Activated naive CD4-positive, alpha-beta T cell treated with anti-CD3 and anti-CD28 coated beads for 36 hours (primary cell): ENCODE measurements at regions of chr14 and their contacts with region 1.

Region 1: DNA sequence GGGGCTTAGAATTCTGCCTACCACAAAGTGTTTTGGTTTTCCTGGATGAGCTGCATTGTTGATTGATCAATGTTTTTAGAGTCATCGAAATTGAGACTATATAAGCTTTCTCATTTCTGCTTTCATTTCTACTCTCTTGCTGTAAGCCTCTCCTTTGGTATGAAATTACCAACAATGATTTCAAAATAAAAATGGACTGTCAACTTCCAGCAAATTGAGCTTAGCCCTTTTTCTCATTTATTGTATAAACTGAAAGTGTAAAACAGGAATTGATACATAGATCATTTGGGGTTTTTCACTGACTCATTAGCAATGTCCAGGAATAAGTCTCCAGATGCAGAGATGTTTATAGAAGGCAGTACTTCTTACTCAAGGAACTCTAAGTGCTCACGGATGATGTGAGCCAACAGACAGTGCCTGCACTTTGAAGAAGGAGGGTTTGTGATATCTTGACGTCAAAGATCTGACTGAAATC is 20.0 kb upstream of the PCNX1 start:
- DNase-seq: peak; percentile 41
- H3K4me3 Mint-ChIP-seq: peak overlapping the region; percentile 39
- H3K27ac Mint-ChIP-seq: peak overlapping the region; percentile 92
- H3K4me1 Mint-ChIP-seq: peaks cover 74% of the 10 kb centered on the region
- H3K27me3 Mint-ChIP-seq: peaks cover 2% of the 10 kb centered on the region

Region 2: DNA sequence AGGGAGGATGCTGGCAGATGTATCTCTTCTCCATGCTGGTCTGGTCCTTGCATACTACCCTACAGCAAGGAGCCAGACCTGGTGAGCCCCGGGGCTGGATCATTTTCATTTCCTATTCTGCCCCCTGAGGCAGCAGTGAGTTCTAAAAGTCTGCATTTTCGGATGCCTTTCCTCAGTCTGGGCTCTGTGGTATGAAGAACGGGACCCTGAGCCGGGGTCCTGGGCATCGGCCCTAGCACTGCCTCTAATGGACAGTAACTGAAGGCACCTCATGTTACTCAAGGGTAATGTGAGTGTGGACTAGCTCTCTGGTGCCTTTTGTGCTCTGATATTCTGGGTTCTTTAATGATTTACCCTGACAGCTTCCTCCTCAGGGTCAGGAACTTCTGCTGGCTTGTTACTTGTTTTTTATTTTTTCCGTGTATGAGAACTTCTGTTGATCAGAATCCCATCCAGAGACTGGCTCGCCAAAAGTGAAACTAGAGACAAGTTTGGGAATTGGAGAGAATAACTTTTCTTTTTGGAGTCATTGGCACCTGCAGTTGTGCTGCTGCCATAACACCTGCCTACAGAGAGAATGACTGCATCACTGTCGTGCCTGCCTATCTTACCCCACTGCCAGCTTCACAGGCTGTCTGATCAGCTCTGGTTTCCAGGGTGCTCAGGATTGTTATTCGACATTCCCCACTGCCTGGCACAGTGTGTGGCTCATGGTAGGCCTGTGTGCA is 1213.5 kb before region 1 on chr14:
- CTCF ChIA-PET with region 1: no interaction called
- intact Hi-C with region 1: loop called (anchors 5 kb)
- DNase-seq: peak; percentile 37
- H3K4me3 Mint-ChIP-seq: peak overlapping the region; percentile 49
- H3K27ac Mint-ChIP-seq: peak overlapping the region; percentile 99
- H3K4me1 Mint-ChIP-seq: peaks cover 94% of the 10 kb centered on the region
- H3K27me3 Mint-ChIP-seq: no peaks in the 10 kb centered on the region

Region 3: GRCh38 chr14:70748422-70748821 is 138.8 kb before region 1 on chr14:
- CTCF ChIA-PET with region 1: no interaction called
- intact Hi-C with region 1: no loop called
- DNase-seq: no peak
- H3K4me3 Mint-ChIP-seq: no peak overlapping the region
- H3K27ac Mint-ChIP-seq: no peak overlapping the region
- H3K4me1 Mint-ChIP-seq: no peaks in the 10 kb centered on the region
- H3K27me3 Mint-ChIP-seq: no peaks in the 10 kb centered on the region

Region 4: GRCh38 chr14:70816525-70816924 is 70.7 kb before region 1 on chr14:
- CTCF ChIA-PET with region 1: interaction called, 9 read pairs
- intact Hi-C with region 1: loop called (anchors 2 kb)
- DNase-seq: no peak
- H3K4me3 Mint-ChIP-seq: no peak overlapping the region
- H3K27ac Mint-ChIP-seq: no peak overlapping the region
- H3K4me1 Mint-ChIP-seq: peaks cover 15% of the 10 kb centered on the region
- H3K27me3 Mint-ChIP-seq: peaks cover 16% of the 10 kb centered on the region

Region 5: DNA sequence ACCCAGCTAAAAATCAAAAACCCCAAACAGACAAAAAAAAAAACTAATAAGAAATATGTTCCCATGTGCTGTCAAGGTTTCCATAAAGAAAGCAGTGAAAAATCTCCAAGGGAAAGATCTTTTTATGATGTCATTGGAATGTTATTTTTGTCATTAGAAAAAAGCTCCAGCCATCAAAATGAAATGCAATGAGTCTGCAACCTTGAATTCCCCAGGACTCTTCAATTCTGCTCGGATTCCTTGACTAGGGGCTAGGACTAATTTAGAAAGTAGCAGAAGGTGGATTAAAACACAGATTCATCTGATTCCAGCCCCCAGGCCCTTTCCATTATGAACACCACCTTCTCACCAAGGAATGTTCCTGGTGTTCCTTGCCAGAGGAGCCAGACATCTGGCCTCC is 14.0 kb after region 1 on chr14:
- CTCF ChIA-PET with region 1: interaction called, 84 read pairs
- intact Hi-C with region 1: loop called (anchors 1 kb)
- DNase-seq: no peak
- H3K4me3 Mint-ChIP-seq: no peak overlapping the region
- H3K27ac Mint-ChIP-seq: peak overlapping the region; percentile 52
- H3K4me1 Mint-ChIP-seq: peaks cover 52% of the 10 kb centered on the region
- H3K27me3 Mint-ChIP-seq: no peaks in the 10 kb centered on the region

Region 6: GRCh38 chr14:70934502-70935134 is 47.4 kb after region 1 on chr14:
- CTCF ChIA-PET with region 1: interaction called, 7 read pairs
- intact Hi-C with region 1: loop called (anchors 1 kb)
- DNase-seq: peak; percentile 37
- H3K4me3 Mint-ChIP-seq: peak overlapping the region; percentile 56
- H3K27ac Mint-ChIP-seq: peak overlapping the region; percentile 84
- H3K4me1 Mint-ChIP-seq: peaks cover 72% of the 10 kb centered on the region
- H3K27me3 Mint-ChIP-seq: no peaks in the 10 kb centered on the region

Region 7: DNA sequence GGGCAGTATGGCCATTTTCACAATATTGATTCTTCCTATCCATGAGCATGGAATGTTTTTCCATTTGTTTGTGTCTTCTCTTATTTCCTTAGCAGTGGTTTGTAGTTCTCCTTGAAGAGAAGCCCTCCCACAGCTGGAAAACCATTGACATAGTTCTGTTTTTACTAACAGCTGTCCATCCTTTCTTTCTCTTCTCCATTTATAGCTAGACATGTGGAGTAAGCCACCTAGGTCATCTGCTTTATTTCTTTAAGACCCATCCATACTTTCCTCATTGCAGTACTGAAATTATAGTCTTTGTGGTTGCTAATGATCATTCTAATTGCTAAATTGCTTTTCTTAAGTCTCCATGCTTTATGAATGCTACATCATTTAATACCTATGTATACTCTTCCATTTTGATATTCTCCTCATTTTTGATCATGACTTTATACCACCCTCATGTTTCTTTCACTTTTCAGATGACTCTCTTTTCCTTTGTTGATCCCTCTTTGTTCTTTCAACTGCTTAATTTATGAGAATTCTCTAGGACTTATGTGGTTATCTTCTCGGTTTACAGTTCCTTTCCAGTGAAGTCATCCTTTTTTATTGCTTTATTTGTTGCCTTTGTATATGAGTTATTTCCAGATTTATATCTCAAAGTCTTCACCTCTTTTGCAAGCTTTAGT is 134.2 kb after region 1 on chr14:
- CTCF ChIA-PET with region 1: no interaction called
- intact Hi-C with region 1: loop called (anchors 1 kb)
- DNase-seq: no peak
- H3K4me3 Mint-ChIP-seq: no peak overlapping the region
- H3K27ac Mint-ChIP-seq: no peak overlapping the region
- H3K4me1 Mint-ChIP-seq: peaks cover 32% of the 10 kb centered on the region
- H3K27me3 Mint-ChIP-seq: no peaks in the 10 kb centered on the region